HCT116 (cell line): ENCODE measurements at regions of chr6 and their contacts with region 1.

Region 1: GRCh38 chr6:20534295-20535262 is at the start of gene CDKAL1:
- DNase-seq: peak; percentile 89
- ATAC-seq: peak; percentile 85
- H3K4me3 ChIP-seq: peak within 1 kb of the TSS; percentile 69 to 72
- H3K27ac ChIP-seq: peak within 1 kb of the TSS; percentile 64
- H3K4me1 ChIP-seq: peaks cover 4 to 18% of the 10 kb centered on the region in 2 experiments; a peak in 3 of 4 replicates
- H3K27me3 ChIP-seq: no peaks in the 10 kb centered on the region
- CTCF ChIP-seq: no peak
- POLR2A ChIP-seq: peak; percentile 84
- RAD21 ChIP-seq: peak; percentile 2; the same call in 1 of the 2 replicates
- total RNA-seq, gene CDKAL1: 14.9 TPM

Region 2: GRCh38 chr6:19501737-19502245 is 1032.8 kb before region 1 on chr6:
- CTCF ChIA-PET with region 1: no interaction called
- POLR2A ChIA-PET with region 1: no interaction called
- RAD21 ChIA-PET with region 1: no interaction called
- intact Hi-C with region 1: no loop called
- DNase-seq: no peak
- ATAC-seq: peak; percentile 54; the same call in 1 of the 2 replicates
- H3K4me3 ChIP-seq: no peak overlapping the region
- H3K27ac ChIP-seq: no peak overlapping the region
- H3K4me1 ChIP-seq: no peaks in the 10 kb centered on the region
- H3K27me3 ChIP-seq: no peaks in the 10 kb centered on the region
- CTCF ChIP-seq: peak in 2 of 3 experiments; percentile 37 to 46; a peak in 4 of 6 replicates
- POLR2A ChIP-seq: no peak
- RAD21 ChIP-seq: no peak

Region 3: GRCh38 chr6:20291764-20292580 is 242.6 kb before region 1 on chr6:
- CTCF ChIA-PET with region 1: interaction called, 9 read pairs
- POLR2A ChIA-PET with region 1: no interaction called
- RAD21 ChIA-PET with region 1: no interaction called
- intact Hi-C with region 1: loop called (anchors 1 kb)
- DNase-seq: peak; percentile 84
- ATAC-seq: peak; percentile 98
- H3K4me3 ChIP-seq: no peak overlapping the region
- H3K27ac ChIP-seq: no peak overlapping the region
- H3K4me1 ChIP-seq: peaks cover 3 to 14% of the 10 kb centered on the region in 2 experiments; a peak in 3 of 4 replicates
- H3K27me3 ChIP-seq: no peaks in the 10 kb centered on the region
- CTCF ChIP-seq: peak; percentile 77 to 85 (median 85)
- POLR2A ChIP-seq: no peak
- RAD21 ChIP-seq: peak; percentile 90